Right ventricle myocardium inferior (tissue), 1 donor: ENCODE measurements at regions of chr12 and their contacts with region 1.

Region 1: GRCh38 chr12:68364893-68365725 is 32.9 kb upstream of the MDM1 start:
- DNase-seq: peak; percentile 96
- ATAC-seq: peak; percentile 97

Region 2: DNA sequence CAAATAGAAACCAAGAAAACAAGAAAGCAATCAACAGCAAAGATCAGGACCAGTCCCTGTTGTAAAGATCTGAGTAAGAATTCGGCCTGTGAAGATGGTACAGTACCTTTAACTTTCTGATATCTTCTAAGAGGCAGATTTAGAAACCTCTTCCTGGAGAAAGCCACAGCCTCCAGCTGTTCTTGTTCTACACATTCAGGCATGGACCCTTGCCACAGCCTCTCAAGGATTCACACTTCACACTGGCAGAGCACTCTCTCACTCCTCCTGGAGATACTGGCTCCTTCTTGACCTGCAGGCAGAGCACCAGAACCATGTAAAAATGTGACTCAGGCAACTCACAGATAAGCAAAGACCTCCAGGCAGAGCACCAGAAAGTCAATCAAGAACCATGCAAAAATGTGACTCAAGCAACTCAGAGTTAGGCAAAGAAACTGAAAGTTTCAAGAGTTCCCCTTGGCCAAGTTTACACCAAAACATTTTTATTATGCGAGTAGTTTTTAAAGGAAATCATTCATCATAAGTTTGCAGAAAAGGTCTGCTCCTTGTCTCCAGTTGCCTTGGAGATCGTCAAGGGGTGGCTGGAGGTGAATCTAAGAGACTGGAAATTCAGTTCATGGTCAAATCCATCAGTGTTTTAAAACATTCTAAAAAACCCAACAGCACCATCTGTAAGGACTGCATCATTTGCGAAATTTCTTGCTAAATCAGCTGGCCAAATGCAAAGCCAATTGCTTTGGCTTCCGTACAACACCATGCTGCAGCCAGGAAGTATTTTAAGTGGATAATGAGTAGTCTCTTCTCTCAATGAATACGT is 86.4 kb after region 1 on chr12:
- intact Hi-C with region 1: loop called (anchors 5 kb)
- DNase-seq: no peak
- ATAC-seq: peak; percentile 73

Region 3: DNA sequence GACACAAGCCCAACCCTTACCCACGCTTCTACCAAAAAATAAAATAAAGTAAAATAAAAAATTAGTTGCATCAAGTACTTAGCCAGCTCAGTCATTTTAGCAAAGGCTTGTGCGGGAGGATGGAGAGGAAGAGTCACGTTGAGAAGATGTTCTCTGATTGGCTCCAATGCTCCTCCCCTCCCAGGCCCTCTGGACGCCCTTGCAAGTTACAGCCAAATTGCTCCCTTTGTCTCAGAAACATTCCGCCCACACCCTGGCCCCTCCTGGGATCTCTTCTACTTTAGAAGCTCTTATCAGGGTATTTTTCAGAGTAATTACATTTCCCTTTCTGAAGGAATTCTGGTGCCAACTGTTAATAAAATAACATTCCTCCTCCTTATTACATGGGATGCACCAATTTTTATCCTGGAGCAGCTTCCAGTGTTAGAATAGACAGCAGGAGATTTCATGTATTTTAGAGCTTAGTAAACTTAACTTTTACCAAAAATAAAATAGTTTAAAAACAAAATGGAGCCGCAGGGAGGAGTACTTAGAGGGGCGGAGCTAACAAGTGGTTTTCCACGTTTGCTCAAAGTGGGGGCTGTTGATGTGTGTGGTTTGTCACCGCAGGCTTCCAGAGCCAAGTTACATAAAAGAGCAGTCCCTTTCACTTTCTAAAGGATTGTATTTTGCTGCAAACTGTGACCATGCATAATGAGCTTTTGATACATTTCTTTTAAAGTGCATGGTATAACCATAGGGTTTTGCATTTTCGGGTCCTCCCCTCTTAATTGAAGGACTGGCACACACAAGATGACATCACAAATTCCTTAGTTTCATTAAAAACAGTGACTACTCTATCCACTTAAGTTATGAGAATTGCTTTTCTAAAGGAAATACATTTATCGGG is 173.9 kb after region 1 on chr12:
- intact Hi-C with region 1: loop called (anchors 10 kb)
- DNase-seq: peak; percentile 85
- ATAC-seq: peak; percentile 97